Transverse colon (tissue), 4 donors: ENCODE measurements at regions of chr1 and their contacts with region 1.

Region 1: GRCh38 chr1:70509996-70510876 is 99.2 kb downstream of the CTH start:
- DNase-seq: no peak
- H3K4me3 ChIP-seq: no peak overlapping the region
- H3K27ac ChIP-seq: no peak overlapping the region
- H3K4me1 ChIP-seq: peaks cover 0 to 3% (median 0%) of the 10 kb centered on the region in 4 donors
- H3K27me3 ChIP-seq: no peaks in the 10 kb centered on the region
- CTCF ChIP-seq: peak; percentile 67 to 78 (median 73)
- EP300 ChIP-seq: no peak
- POLR2A ChIP-seq: no peak

Region 2: DNA sequence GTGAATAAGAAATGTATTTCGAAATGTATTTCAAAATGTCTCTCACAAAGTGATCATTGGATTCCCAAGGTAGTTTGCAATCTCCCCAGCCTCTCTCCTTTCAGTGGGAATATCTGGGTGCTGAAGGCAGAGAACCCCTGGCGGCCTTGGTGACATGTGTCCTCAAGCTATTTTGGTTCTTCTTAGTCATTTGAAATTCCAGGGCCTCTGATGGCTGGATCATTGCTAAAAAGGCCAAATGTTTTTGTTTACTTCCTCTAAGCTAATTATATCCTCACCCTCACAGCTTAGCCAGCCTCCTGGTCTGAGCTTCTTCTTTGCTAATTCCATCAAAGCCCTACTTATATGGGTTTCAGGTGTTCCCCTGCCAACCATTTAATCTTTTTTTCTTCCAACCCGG is 376.1 kb before region 1 on chr1:
- in situ Hi-C with region 1: loop called (anchors 5 to 10 kb)
- intact Hi-C with region 1: loop called (anchors 10 kb)
- DNase-seq: no peak
- H3K4me3 ChIP-seq: no peak overlapping the region
- H3K27ac ChIP-seq: no peak overlapping the region
- H3K4me1 ChIP-seq: peaks cover 0 to 6% (median 2%) of the 10 kb centered on the region in 4 donors
- H3K27me3 ChIP-seq: no peaks in the 10 kb centered on the region
- CTCF ChIP-seq: no peak
- EP300 ChIP-seq: no peak
- POLR2A ChIP-seq: no peak

Region 3: GRCh38 chr1:70142075-70142474 is 368.2 kb before region 1 on chr1:
- in situ Hi-C with region 1: loop called (anchors 5 to 10 kb)
- intact Hi-C with region 1: loop called (anchors 10 kb)
- DNase-seq: no peak
- H3K4me3 ChIP-seq: no peak overlapping the region
- H3K27ac ChIP-seq: no peak overlapping the region
- H3K4me1 ChIP-seq: peaks cover 0 to 19% (median 5%) of the 10 kb centered on the region in 4 donors
- H3K27me3 ChIP-seq: no peaks in the 10 kb centered on the region
- CTCF ChIP-seq: no peak
- EP300 ChIP-seq: no peak
- POLR2A ChIP-seq: no peak

Region 4: GRCh38 chr1:70436622-70437251 is 73.5 kb before region 1 on chr1:
- in situ Hi-C with region 1: no loop called
- intact Hi-C with region 1: loop called (anchors 5 kb)
- DNase-seq: no peak
- H3K4me3 ChIP-seq: no peak overlapping the region
- H3K27ac ChIP-seq: no peak overlapping the region
- H3K4me1 ChIP-seq: peaks cover 0 to 23% (median 3%) of the 10 kb centered on the region in 4 donors
- H3K27me3 ChIP-seq: no peaks in the 10 kb centered on the region
- CTCF ChIP-seq: peak; percentile 18 to 39 (median 25)
- EP300 ChIP-seq: no peak
- POLR2A ChIP-seq: no peak

Region 5: DNA sequence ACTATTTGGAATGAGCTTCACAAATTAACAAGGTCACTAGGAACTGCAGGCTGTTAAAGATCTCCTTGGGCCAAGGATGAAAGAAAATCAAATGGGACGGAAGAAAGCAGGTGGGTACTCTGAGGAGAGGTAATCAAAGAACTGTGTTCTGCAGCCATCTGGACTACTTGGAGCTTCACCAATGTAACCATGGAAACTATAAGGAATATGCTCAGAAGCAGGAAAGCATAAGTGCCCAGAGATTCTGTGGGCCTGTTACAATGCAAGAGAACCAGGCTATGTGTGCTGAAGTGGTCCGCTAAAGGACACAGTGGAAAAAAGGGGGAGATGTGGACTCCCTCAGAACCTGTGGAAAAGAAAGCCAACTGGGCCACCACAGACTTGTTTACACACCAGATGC is 298.8 kb after region 1 on chr1:
- in situ Hi-C with region 1: no loop called
- intact Hi-C with region 1: no loop called
- DNase-seq: no peak
- H3K4me3 ChIP-seq: no peak overlapping the region
- H3K27ac ChIP-seq: no peak overlapping the region
- H3K4me1 ChIP-seq: no peaks in the 10 kb centered on the region
- H3K27me3 ChIP-seq: no peaks in the 10 kb centered on the region
- CTCF ChIP-seq: no peak
- EP300 ChIP-seq: no peak
- POLR2A ChIP-seq: no peak